ENCODE measurements at regions of chr18 and their contacts with region 1.

Region 1: DNA sequence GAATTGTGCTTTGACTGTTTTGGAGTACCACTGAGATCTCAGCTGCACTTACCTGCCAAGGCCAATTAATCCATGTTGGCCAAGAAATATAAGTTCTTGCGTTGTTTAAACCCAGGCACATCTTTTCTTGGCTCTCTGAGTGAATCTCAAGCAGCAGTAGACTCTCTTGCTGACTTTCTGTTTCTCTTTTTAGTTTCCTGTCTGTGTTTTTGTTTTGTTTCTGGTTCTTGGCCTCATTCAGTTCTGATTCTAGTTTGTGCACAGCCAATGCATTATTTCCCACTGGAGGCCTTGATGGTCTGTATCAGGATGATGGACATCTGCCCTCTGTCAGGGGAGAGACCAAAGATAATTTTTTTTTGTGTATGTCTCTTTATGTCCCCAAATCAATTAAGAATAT is 379.4 kb downstream of the CDH2 start:
- DNase-seq: no peak
- H3K4me3 Mint-ChIP-seq: no peak overlapping the region
- H3K27ac Mint-ChIP-seq: no peak overlapping the region
- H3K4me1 Mint-ChIP-seq: no peaks in the 10 kb centered on the region
- H3K27me3 Mint-ChIP-seq: no peaks in the 10 kb centered on the region
- CTCF ChIP-seq: no peak

Region 2: DNA sequence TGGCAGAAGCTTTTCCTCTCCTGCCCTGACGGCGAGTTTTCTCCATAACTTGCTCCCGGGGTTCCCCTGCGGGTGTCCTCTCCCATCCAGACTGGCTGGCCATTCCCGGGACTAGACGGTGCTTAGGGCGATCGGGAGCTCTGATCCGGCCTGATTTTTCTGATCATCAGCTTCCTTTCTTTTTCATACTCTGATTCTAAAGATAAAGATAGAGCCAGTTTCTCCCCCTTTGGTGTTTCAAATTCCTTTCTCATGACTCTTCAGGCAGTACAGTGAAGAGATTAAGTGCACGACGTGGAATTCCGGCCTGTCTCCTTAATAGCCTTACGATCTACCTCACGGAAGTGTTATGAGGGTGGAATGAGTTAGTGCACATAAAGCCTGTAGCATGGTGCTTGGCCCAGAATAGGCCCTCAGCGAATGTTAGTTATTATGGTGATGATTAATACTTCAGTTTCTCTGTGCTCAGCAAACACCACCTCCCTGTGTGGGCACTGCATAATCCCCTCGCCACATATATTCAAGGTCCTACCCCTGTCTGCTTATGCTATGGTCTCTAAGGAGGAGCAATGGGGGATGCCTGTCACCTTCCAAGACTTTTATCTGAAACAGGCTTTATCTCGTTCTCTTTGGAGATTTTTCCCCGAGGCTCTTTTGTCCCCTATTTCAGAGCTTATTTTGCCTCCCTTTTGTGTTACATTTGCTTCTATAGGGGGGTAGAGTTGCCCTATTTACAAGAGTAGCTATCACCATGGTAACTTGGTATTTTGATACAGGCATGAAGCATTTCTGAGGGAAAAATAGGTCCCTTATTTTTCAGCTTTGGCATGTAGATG is 124.6 kb after region 1 on chr18:
- CTCF ChIA-PET with region 1: no interaction called
- intact Hi-C with region 1: loop called (anchors 10 kb)
- DNase-seq: peak; percentile 52
- H3K4me3 Mint-ChIP-seq: peak overlapping the region; percentile 74
- H3K27ac Mint-ChIP-seq: peak overlapping the region; percentile 96
- H3K4me1 Mint-ChIP-seq: peaks cover 14% of the 10 kb centered on the region
- H3K27me3 Mint-ChIP-seq: no peaks in the 10 kb centered on the region
- CTCF ChIP-seq: no peak